Endothelial cell of umbilical vein (primary cell): ENCODE measurements at regions of chr3 and their contacts with region 1.

Region 1: GRCh38 chr3:127822698-127823425 is 547 bp upstream of the MGLL start:
- DNase-seq: no peak
- H3K4me3 ChIP-seq: peak overlapping the region; percentile 65 to 98 (median 69)
- H3K27ac ChIP-seq: peak overlapping the region; percentile 44
- H3K4me1 ChIP-seq: peaks cover 23% of the 10 kb centered on the region
- H3K27me3 ChIP-seq: no peaks in the 10 kb centered on the region
- CTCF ChIP-seq: peak in 1 of 2 donors; percentile 4
- POLR2A ChIP-seq: peak; percentile 39

Region 2: DNA sequence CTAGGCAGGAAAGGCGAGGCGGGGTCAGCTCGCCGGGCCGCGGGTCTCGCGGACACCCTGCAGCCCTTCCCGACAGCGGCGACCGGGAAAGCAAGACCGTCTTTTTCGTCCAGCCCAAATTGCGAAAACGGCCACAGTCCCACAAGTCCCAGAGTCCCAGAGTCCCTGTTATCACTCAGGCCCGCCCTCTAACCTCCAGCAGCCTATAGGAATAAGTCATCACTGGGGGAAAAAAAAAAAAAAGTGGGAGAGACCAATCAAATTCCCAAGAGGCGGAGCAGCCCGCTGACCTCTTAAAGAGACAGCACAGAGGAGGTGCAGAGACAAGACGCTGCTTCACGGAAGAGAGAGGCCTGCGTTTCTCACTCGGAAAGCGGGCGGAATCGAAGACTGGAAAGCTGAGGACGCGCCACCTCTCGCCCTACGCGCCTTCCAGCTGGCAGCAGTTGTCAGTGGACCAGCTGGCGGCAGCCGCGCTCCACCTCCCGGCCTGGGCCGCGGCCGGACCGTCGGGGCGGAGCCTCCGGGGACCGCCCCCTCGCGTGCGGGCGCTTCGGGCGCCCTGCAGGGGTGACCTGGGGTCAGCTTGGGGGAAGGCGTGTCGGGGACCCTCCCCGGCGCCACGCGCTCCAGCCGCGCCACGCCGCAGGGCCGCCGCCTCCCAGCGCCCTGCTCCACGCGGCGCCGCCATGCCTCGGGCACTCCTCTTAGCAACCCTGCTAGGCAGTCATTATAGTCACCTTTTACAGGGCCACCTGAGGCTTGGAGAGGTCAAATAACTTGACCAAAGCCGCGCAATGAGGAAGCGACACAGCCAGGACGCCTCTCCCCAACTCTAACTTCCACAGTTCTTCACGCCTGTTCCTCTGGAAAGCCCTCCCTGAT is 232.0 kb before region 1 on chr3 and contains the start of gene TPRA1:
- CTCF ChIA-PET with region 1: no interaction called
- POLR2A ChIA-PET with region 1: no interaction called
- dilution Hi-C with region 1: no loop called
- intact Hi-C with region 1: loop called (anchors 2 kb)
- DNase-seq: peak; percentile 96
- H3K4me3 ChIP-seq: peak within 1 kb of the TSS; percentile 73 to 80 (median 78)
- H3K27ac ChIP-seq: peak within 1 kb of the TSS; percentile 66
- H3K4me1 ChIP-seq: peaks cover 15% of the 10 kb centered on the region
- H3K27me3 ChIP-seq: no peaks in the 10 kb centered on the region
- CTCF ChIP-seq: no peak
- POLR2A ChIP-seq: peak; percentile 23
- total RNA-seq, gene TPRA1: 34.3 and 34.6 TPM in 2 replicates

Region 3: GRCh38 chr3:127690823-127691452 is 131.9 kb before region 1 on chr3:
- CTCF ChIA-PET with region 1: interaction called, 74 read pairs
- POLR2A ChIA-PET with region 1: no interaction called
- dilution Hi-C with region 1: no loop called
- intact Hi-C with region 1: loop called (anchors 2 kb)
- DNase-seq: peak; percentile 48
- H3K4me3 ChIP-seq: no peak overlapping the region
- H3K27ac ChIP-seq: no peak overlapping the region
- H3K4me1 ChIP-seq: no peaks in the 10 kb centered on the region
- H3K27me3 ChIP-seq: no peaks in the 10 kb centered on the region
- CTCF ChIP-seq: peak; percentile 47 to 87
- POLR2A ChIP-seq: no peak

Region 4: DNA sequence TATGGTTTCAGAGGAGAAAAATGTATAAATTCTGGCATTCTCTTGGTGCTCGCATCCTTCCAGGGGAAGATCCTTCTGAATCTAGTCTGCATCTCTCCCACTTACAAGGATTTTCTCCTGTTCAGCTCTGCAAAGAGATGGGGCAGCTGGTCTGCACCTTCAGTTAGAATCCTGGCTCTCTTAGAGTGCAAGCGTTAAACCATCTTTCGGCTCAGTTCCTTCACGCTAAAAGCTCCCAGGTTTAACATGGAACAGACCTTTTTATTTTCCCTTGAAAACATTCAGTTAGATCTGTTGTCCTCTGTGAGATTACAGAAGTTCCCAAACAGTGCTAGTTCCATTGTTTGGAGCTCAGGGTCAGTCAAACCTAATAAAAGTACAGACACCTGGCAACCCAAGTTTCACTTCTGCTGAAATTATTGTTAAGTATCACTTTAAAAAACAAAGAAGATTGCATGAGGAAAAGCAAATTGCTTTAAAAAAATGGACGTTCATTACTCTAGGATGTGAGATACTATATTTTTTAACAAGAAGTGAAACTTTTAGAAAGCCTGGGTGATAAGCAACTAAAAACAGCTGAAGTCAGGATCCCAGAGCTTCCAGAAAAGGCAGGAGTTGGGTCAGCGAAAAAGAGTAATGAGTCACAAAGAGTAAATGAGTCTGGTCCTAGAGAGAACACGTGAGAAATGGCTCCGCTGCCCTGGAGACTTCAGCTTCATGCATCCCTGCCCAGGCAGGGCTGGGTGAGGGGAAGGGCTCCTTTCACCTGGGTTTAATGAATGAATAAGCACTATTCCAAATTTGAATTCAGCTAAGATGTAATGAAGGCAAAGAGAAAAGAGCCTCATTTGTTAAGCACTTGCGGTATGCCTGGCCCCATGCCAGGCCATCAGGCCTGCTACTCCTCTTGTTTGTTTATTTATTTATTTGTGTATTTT is 86.8 kb before region 1 on chr3:
- CTCF ChIA-PET with region 1: interaction called, 3 read pairs
- POLR2A ChIA-PET with region 1: no interaction called
- dilution Hi-C with region 1: no loop called
- intact Hi-C with region 1: loop called (anchors 2 kb)
- DNase-seq: peak; percentile 59
- H3K4me3 ChIP-seq: no peak overlapping the region
- H3K27ac ChIP-seq: peak overlapping the region; percentile 91
- H3K4me1 ChIP-seq: peaks cover 43% of the 10 kb centered on the region
- H3K27me3 ChIP-seq: no peaks in the 10 kb centered on the region
- CTCF ChIP-seq: no peak
- POLR2A ChIP-seq: no peak

Region 5: GRCh38 chr3:127768346-127769008 is 54.4 kb before region 1 on chr3:
- CTCF ChIA-PET with region 1: interaction called, 5 read pairs
- POLR2A ChIA-PET with region 1: interaction called, 3 read pairs
- dilution Hi-C with region 1: no loop called
- intact Hi-C with region 1: loop called (anchors 1 kb)
- DNase-seq: peak; percentile 70
- H3K4me3 ChIP-seq: no peak overlapping the region
- H3K27ac ChIP-seq: peak overlapping the region; percentile 81
- H3K4me1 ChIP-seq: peaks cover 25% of the 10 kb centered on the region
- H3K27me3 ChIP-seq: no peaks in the 10 kb centered on the region
- CTCF ChIP-seq: no peak
- POLR2A ChIP-seq: no peak

Region 6: DNA sequence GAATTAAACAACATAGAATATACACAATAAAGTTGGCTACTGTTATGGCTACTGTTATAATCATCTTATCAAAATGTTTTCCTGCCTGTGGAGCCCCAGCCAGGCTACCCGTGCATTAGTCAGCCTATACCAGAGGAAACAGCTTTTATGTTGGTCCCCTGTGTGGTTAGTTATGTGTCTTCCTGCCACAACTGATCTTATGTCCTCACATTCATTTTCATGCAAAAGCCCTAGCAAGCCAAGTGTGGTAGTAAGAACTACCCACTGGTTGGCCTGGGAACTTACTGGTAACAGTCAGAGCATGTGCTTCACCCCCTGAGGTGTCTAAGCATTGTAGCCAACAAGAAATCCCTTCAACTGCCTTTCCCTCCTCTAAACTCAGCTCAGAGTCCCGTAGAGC is 22.4 kb before region 1 on chr3:
- CTCF ChIA-PET with region 1: interaction called, 8 read pairs
- POLR2A ChIA-PET with region 1: interaction called, 3 read pairs
- dilution Hi-C with region 1: no loop called
- intact Hi-C with region 1: loop called (anchors 1 kb)
- DNase-seq: peak; percentile 89
- H3K4me3 ChIP-seq: no peak overlapping the region
- H3K27ac ChIP-seq: peak overlapping the region; percentile 100
- H3K4me1 ChIP-seq: peaks cover 62% of the 10 kb centered on the region
- H3K27me3 ChIP-seq: no peaks in the 10 kb centered on the region
- CTCF ChIP-seq: no peak
- POLR2A ChIP-seq: peak; percentile 36

Region 7: DNA sequence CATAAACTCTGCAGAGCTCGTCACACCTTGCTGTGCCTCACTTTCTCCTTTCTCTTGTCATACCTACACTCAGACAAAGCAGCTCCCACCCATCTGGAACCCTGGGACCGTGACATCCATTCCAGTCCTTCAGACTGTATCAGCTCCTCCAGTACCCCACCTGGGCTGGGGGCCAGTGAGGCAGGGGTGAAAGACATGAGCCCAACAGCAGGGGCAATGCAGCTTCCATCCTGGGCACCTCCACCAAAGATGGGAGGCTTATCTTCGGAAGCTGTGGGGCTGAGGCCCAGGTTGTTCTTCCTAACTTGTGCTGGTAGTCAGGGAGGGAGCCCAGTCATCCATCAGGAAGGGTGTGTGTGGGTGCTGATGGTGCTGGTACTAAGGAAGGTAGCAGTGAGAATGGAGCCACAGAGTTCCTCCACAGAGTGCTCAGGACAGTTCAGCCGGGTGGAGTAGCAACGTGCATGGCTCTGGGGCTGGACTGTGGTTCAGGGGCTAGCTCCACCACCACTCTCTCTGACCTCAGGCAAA is 439.7 kb after region 1 on chr3:
- CTCF ChIA-PET with region 1: no interaction called
- POLR2A ChIA-PET with region 1: no interaction called
- dilution Hi-C with region 1: no loop called
- intact Hi-C with region 1: no loop called
- DNase-seq: no peak
- H3K4me3 ChIP-seq: no peak overlapping the region
- H3K27ac ChIP-seq: no peak overlapping the region
- H3K4me1 ChIP-seq: peaks cover 3% of the 10 kb centered on the region
- H3K27me3 ChIP-seq: no peaks in the 10 kb centered on the region
- CTCF ChIP-seq: no peak
- POLR2A ChIP-seq: no peak